ENCODE measurements at regions of chr5 and their contacts with region 1.

Region 1: GRCh38 chr5:62305715-62306322 is at the start of gene KIF2A:
- DNase-seq: peak; percentile 76
- ATAC-seq: peak; percentile 96
- H3K4me3 ChIP-seq: peak within 1 kb of the TSS; percentile 84 to 93 (median 89)
- H3K27ac ChIP-seq: peak within 1 kb of the TSS; percentile 78
- H3K4me1 ChIP-seq: peaks cover 25% of the 10 kb centered on the region
- H3K27me3 ChIP-seq: no peaks in the 10 kb centered on the region
- CTCF ChIP-seq: peak; percentile 36
- EP300 ChIP-seq: no peak
- POLR2A ChIP-seq: peak; percentile 55 to 64
- RAD21 ChIP-seq: no peak
- total RNA-seq, gene KIF2A: 19.2 and 36.4 TPM in 2 replicates

Region 2: DNA sequence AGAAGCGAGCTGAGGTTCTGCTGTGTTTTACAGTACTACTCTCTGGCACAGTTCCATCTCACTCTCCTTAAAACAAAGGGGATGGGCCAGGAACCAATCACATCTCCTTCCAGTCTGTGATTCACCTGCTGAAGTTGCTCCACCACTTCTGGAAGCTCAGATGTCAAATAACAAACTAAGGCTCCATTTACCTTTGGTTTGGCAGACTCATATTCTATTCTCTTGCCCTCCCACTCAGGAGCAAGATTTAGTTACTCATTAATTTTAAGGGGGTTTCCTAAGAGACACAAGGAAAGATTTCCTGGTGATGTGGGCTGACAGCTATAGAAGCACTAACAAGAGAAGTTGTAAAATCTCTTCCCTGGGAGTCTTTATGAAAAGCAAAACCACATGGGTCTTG is 37.6 kb before region 1 on chr5:
- CTCF ChIA-PET with region 1: no interaction called
- POLR2A ChIA-PET with region 1: no interaction called
- in situ Hi-C with region 1: no loop called
- intact Hi-C with region 1: no loop called
- DNase-seq: peak; percentile 4
- ATAC-seq: no peak
- H3K4me3 ChIP-seq: no peak overlapping the region
- H3K27ac ChIP-seq: no peak overlapping the region
- H3K4me1 ChIP-seq: no peaks in the 10 kb centered on the region
- H3K27me3 ChIP-seq: no peaks in the 10 kb centered on the region; a peak in 1 of 5 replicates
- CTCF ChIP-seq: no peak
- EP300 ChIP-seq: no peak
- POLR2A ChIP-seq: no peak
- RAD21 ChIP-seq: no peak

Region 3: DNA sequence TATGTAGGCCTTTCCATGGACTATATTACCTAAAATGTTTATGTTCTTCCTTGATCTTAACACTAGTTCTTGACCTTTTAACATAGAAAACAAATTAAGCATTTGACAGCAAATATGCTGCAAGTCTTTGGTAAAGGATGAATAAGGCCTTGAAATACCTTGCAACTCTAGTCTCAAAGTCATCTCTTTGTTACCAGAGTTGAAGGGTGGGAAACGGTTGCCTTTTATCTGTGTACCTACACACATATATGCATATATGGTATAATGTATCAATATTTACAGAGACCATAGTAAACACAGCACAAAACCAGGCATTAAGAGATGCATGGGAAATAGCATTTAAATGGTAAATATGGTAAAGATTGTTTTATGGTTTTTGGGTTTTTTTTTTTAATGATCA is 16.7 kb after region 1 on chr5:
- CTCF ChIA-PET with region 1: no interaction called
- POLR2A ChIA-PET with region 1: interaction called, 3 read pairs
- in situ Hi-C with region 1: no loop called
- intact Hi-C with region 1: loop called (anchors 2 kb)
- DNase-seq: peak; percentile 81
- ATAC-seq: peak; percentile 97
- H3K4me3 ChIP-seq: no peak overlapping the region
- H3K27ac ChIP-seq: no peak overlapping the region
- H3K4me1 ChIP-seq: peaks cover 11% of the 10 kb centered on the region
- H3K27me3 ChIP-seq: no peaks in the 10 kb centered on the region
- CTCF ChIP-seq: no peak
- EP300 ChIP-seq: peak in 1 of 2 experiments; percentile 50; a peak in 1 of 4 replicates
- POLR2A ChIP-seq: no peak
- RAD21 ChIP-seq: no peak

Region 4: DNA sequence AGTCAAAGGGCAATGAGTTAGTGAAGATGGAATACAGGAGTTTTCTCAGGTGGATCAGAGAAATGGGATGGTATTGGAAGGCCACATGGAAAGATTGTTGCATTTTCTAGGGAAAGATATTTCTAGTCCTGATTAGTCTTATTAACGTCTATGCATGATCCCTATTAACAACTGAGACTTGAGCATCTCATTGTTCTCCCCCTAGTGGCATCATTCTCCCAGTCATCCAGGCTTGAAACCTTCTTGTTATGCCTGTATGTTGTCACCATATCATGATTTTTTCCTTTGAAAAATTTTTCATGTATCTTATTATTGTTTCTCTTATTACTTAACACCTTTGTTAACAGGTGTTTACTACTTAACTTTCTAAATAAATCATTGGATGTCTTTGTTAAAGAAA is 34.6 kb after region 1 on chr5:
- CTCF ChIA-PET with region 1: no interaction called
- POLR2A ChIA-PET with region 1: no interaction called
- in situ Hi-C with region 1: no loop called
- intact Hi-C with region 1: loop called (anchors 2 kb)
- DNase-seq: peak; percentile 39
- ATAC-seq: peak; percentile 69
- H3K4me3 ChIP-seq: no peak overlapping the region
- H3K27ac ChIP-seq: no peak overlapping the region
- H3K4me1 ChIP-seq: no peaks in the 10 kb centered on the region
- H3K27me3 ChIP-seq: no peaks in the 10 kb centered on the region
- CTCF ChIP-seq: peak; percentile 23; the same call in 1 of the 2 replicates
- EP300 ChIP-seq: no peak
- POLR2A ChIP-seq: no peak
- RAD21 ChIP-seq: no peak

Region 5: DNA sequence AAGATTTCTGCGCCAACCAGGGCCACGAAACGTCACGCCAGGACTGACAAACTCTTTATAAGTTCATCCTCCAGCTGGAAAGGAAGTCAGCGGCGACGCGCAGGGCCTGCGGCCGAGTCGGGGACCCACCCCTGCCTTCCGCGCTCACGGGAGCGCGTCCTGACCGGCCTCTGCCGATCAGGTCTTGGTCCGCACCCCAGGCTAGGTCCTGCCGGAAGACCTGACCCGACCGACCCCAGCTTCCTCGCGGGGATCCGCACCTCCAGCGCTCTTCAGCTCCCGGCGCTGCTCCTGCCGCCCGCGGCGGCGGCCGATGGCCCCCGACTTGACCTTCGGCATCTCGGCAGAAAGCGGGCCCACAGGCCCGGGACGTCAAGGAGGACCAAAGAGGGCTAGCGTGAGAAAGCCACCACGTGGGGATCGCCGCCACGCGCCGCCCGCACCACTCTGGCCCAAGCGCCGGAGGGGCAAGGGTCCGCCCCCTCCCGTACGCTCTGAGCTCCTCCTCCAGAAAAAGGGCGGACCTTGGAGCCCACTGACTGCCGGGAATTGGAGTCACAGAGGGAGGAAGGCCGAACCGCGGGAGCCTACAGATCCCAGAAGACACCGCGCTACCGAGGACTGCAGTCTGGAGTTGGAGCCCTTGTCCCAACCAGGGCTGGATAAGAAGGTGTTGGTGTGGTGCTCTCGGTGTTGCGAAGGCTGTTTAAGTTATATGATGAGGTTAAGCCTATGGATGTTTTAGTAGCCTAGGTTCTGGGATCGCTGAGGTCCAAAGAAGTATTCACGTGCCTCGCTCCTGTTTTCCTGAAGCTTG is 97.8 kb after region 1 on chr5 and contains the start of gene DIMT1:
- CTCF ChIA-PET with region 1: no interaction called
- POLR2A ChIA-PET with region 1: interaction called, 10 read pairs
- in situ Hi-C with region 1: no loop called
- intact Hi-C with region 1: no loop called
- DNase-seq: peak; percentile 95
- ATAC-seq: peak; percentile 99
- H3K4me3 ChIP-seq: peak within 1 kb of the TSS; percentile 75 to 88 (median 79)
- H3K27ac ChIP-seq: peak within 1 kb of the TSS; percentile 91
- H3K4me1 ChIP-seq: peaks cover 24% of the 10 kb centered on the region
- H3K27me3 ChIP-seq: no peaks in the 10 kb centered on the region
- CTCF ChIP-seq: 0 out of 2 replicates have a peak, but pooled peaks have one; percentile 6
- EP300 ChIP-seq: no peak
- POLR2A ChIP-seq: peak; percentile 87 to 99
- RAD21 ChIP-seq: peak; percentile 44; the same call in 1 of the 2 replicates
- total RNA-seq, gene DIMT1: 35.2 and 37.7 TPM in 2 replicates